Esophagus muscularis mucosa (tissue), 4 donors: ENCODE measurements at regions of chr1 and their contacts with region 1.

Region 1: GRCh38 chr1:154272217-154272998 is at the start of gene HAX1:
- DNase-seq: peak; percentile 98
- H3K4me3 ChIP-seq: peak within 1 kb of the TSS; percentile 70 to 86 (median 73)
- H3K27ac ChIP-seq: peak within 1 kb of the TSS; percentile 86 to 92 (median 87)
- H3K4me1 ChIP-seq: peaks cover 16 to 24% (median 24%) of the 10 kb centered on the region in 4 donors
- H3K27me3 ChIP-seq: no peaks in the 10 kb centered on the region
- CTCF ChIP-seq: peak; percentile 72 to 87 (median 77)
- EP300 ChIP-seq: no peak
- POLR2A ChIP-seq: peak; percentile 41
- total RNA-seq, gene HAX1: 71.0 to 127 (median 104) TPM

Region 2: DNA sequence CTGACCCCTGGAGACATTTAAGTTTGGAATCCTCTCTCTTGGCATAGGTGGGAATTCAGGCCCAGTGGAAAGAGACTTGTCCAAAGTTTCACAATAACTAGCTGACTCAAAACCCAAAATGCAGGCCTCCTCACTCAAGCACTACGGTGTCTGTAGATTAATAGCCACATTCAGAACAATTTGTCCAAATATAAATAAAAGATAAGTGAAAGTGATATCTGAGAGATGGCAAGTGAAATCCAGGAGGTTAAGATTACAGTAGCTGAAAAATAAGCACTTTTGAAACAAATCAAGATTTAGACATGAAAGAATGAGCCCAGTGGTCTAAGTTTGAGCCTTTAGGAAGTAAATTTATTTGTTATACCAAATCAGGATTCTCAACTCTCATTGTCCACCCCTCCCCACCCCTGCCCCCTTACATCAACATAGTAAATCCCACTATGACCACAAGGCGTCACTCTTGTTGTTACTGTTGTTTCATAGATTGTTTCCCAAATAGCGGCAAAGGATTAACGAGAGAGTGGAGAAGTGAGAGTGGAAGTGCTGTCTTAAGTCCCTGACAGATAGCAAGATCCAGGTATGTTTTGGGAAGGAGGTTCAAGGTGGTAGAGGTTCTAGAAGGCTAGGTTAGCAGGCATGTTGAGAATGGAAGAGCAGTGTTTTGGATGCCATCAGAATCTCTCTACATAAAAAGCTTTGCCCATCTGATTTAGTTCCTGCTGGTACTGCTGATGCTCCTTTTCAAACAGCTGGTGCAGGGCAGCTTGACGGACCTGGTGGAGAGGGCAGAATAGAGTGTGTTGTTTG is 73.4 kb before region 1 on chr1:
- intact Hi-C with region 1: loop called (anchors 5 kb)
- DNase-seq: no peak
- H3K4me3 ChIP-seq: peak overlapping the region in 1 of 4 donors; percentile 20
- H3K27ac ChIP-seq: peak overlapping the region in 3 of 4 donors; percentile 9 to 14 (median 13)
- H3K4me1 ChIP-seq: peaks cover 0 to 11% (median 10%) of the 10 kb centered on the region in 4 donors
- H3K27me3 ChIP-seq: no peaks in the 10 kb centered on the region
- CTCF ChIP-seq: peak; percentile 45 to 65 (median 52)
- EP300 ChIP-seq: no peak
- POLR2A ChIP-seq: no peak

Region 3: GRCh38 chr1:154220071-154220969 is 52.1 kb before region 1 on chr1 and contains the start of gene UBAP2L:
- intact Hi-C with region 1: loop called (anchors 2 kb)
- DNase-seq: peak; percentile 100
- H3K4me3 ChIP-seq: peak within 1 kb of the TSS; percentile 70 to 94 (median 90)
- H3K27ac ChIP-seq: peak within 1 kb of the TSS; percentile 97 to 100 (median 98)
- H3K4me1 ChIP-seq: peaks cover 44 to 77% (median 63%) of the 10 kb centered on the region in 4 donors
- H3K27me3 ChIP-seq: no peaks in the 10 kb centered on the region
- CTCF ChIP-seq: no peak
- EP300 ChIP-seq: peak; percentile 87
- POLR2A ChIP-seq: peak; percentile 38
- total RNA-seq, gene UBAP2L: 53.6 to 79.7 (median 63.4) TPM

Region 4: GRCh38 chr1:154324669-154325582 is 52.5 kb after region 1 on chr1 and contains the start of gene ATP8B2:
- intact Hi-C with region 1: loop called (anchors 5 kb)
- DNase-seq: peak; percentile 95
- H3K4me3 ChIP-seq: peak within 1 kb of the TSS; percentile 88 to 99 (median 96)
- H3K27ac ChIP-seq: peak within 1 kb of the TSS; percentile 99 to 100 (median 99)
- H3K4me1 ChIP-seq: peaks cover 34 to 52% (median 50%) of the 10 kb centered on the region in 4 donors
- H3K27me3 ChIP-seq: no peaks in the 10 kb centered on the region
- CTCF ChIP-seq: peak; percentile 91 to 98 (median 96)
- EP300 ChIP-seq: no peak
- POLR2A ChIP-seq: no peak
- total RNA-seq, gene ATP8B2: 108 to 178 (median 128) TPM

Region 5: GRCh38 chr1:154405762-154406571 is 133.6 kb after region 1 on chr1:
- intact Hi-C with region 1: no loop called
- DNase-seq: no peak
- H3K4me3 ChIP-seq: peak overlapping the region; percentile 77 to 93 (median 85)
- H3K27ac ChIP-seq: peak overlapping the region; percentile 97 to 100 (median 98)
- H3K4me1 ChIP-seq: peaks cover 53 to 61% (median 56%) of the 10 kb centered on the region in 4 donors
- H3K27me3 ChIP-seq: no peaks in the 10 kb centered on the region
- CTCF ChIP-seq: peak; percentile 27 to 50 (median 28)
- EP300 ChIP-seq: no peak
- POLR2A ChIP-seq: peak; percentile 30